GM12878 (cell line): ENCODE measurements at regions of chr22 and their contacts with region 1.

Region 1: DNA sequence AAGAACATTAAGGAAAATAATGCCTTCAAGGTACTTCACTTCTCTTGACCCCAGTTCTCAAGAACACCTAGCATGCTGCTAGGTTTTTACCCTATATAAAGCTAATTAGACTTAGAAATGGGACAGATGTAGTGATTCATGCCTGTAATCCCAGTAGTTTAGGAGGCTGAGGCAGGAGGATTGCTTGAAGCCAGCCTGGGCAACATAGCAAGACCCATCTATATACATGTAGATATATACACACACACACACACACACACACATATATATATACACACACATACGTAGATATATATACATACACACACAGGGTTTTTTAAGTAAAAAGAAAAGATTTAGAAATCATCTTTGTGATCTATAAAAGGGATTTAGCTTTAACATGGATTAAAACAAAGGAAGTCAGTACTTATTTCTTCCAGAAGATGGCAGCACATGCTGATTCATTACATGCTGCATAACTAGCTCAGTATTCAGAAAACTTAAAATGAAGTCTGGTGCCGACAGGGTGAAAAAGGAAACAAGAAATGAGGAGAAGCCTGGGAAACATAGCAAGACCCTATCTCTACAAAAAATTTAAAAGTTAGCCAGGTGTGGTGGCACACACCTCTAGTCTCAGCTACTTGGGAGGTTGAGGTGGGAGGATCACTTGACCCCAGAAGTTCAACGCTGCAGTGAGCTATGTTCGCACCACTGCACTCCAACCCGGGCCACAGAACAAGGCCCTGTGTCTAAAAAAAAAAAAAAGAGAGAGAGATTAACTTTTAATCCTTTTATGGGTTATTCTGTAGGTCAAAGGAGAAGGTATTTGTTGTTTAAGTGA is 28.5 kb upstream of the RBX1 start:
- DNase-seq: peak; percentile 47
- ATAC-seq: peak; percentile 88
- H3K4me3 ChIP-seq: no peak overlapping the region
- H3K27ac ChIP-seq: no peak overlapping the region
- H3K4me1 ChIP-seq: no peaks in the 10 kb centered on the region
- H3K27me3 ChIP-seq: no peaks in the 10 kb centered on the region
- CTCF ChIP-seq: peak; percentile 41 to 67 (median 56); a peak in 5 of 6 replicates
- EP300 ChIP-seq: no peak
- POLR2A ChIP-seq: no peak
- RAD21 ChIP-seq: peak; percentile 84

Region 2: GRCh38 chr22:40939202-40939601 is 16.5 kb after region 1 on chr22:
- CTCF ChIA-PET with region 1: interaction called, 23 read pairs
- POLR2A ChIA-PET with region 1: no interaction called
- RAD21 ChIA-PET with region 1: interaction called, 6 read pairs
- SMC1A ChIA-PET with region 1: interaction called, 25 read pairs
- in situ Hi-C with region 1: no loop called
- intact Hi-C with region 1: no loop called
- DNase-seq: no peak
- ATAC-seq: peak; percentile 54; the same call in 2 of the 3 replicates
- H3K4me3 ChIP-seq: no peak overlapping the region
- H3K27ac ChIP-seq: no peak overlapping the region
- H3K4me1 ChIP-seq: peaks cover 17% of the 10 kb centered on the region
- H3K27me3 ChIP-seq: no peaks in the 10 kb centered on the region
- CTCF ChIP-seq: no peak
- EP300 ChIP-seq: no peak
- POLR2A ChIP-seq: no peak
- RAD21 ChIP-seq: no peak

Region 3: DNA sequence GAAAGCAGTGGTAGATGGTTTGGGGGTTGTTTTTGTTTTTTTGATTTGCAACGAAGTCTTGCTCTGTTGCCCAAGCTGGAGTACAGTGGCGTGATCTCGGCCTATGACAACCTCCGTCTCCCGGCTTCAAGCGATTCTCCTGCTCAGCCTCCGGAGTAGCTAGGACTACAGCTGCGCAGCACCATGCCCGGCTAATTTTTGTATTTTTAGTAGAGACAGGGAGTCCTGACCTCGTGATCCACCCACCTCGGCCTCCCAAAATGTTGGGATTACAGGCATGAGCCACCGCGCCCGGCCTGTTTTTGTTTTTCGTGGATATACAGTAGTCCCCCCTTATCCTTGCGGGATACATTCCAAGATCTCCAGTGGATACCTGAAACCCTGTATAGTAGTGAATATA is 176.3 kb after region 1 on chr22:
- CTCF ChIA-PET with region 1: interaction called, 13 read pairs
- POLR2A ChIA-PET with region 1: interaction called, 8 read pairs
- RAD21 ChIA-PET with region 1: interaction called, 23 read pairs
- SMC1A ChIA-PET with region 1: interaction called, 13 read pairs
- in situ Hi-C with region 1: no loop called
- intact Hi-C with region 1: no loop called
- DNase-seq: no peak
- ATAC-seq: no peak
- H3K4me3 ChIP-seq: no peak overlapping the region
- H3K27ac ChIP-seq: no peak overlapping the region
- H3K4me1 ChIP-seq: no peaks in the 10 kb centered on the region; the same call in 1 of the 2 replicates
- H3K27me3 ChIP-seq: no peaks in the 10 kb centered on the region
- CTCF ChIP-seq: no peak
- EP300 ChIP-seq: no peak
- POLR2A ChIP-seq: no peak
- RAD21 ChIP-seq: no peak

Region 4: GRCh38 chr22:41140365-41140957 is 217.8 kb after region 1 on chr22:
- CTCF ChIA-PET with region 1: interaction called, 16 read pairs
- POLR2A ChIA-PET with region 1: no interaction called
- RAD21 ChIA-PET with region 1: interaction called, 7 read pairs
- SMC1A ChIA-PET with region 1: interaction called, 6 read pairs
- in situ Hi-C with region 1: no loop called
- intact Hi-C with region 1: loop called (anchors 5 kb)
- DNase-seq: no peak
- ATAC-seq: no peak
- H3K4me3 ChIP-seq: no peak overlapping the region
- H3K27ac ChIP-seq: no peak overlapping the region
- H3K4me1 ChIP-seq: no peaks in the 10 kb centered on the region
- H3K27me3 ChIP-seq: no peaks in the 10 kb centered on the region
- CTCF ChIP-seq: no peak
- EP300 ChIP-seq: no peak
- POLR2A ChIP-seq: no peak
- RAD21 ChIP-seq: no peak

Region 5: GRCh38 chr22:41191467-41191866 is 268.8 kb after region 1 on chr22:
- CTCF ChIA-PET with region 1: interaction called, 6 read pairs
- POLR2A ChIA-PET with region 1: interaction called, 10 read pairs
- RAD21 ChIA-PET with region 1: interaction called, 4 read pairs
- SMC1A ChIA-PET with region 1: interaction called, 5 read pairs
- in situ Hi-C with region 1: no loop called
- intact Hi-C with region 1: no loop called
- DNase-seq: no peak
- ATAC-seq: no peak
- H3K4me3 ChIP-seq: no peak overlapping the region
- H3K27ac ChIP-seq: no peak overlapping the region
- H3K4me1 ChIP-seq: no peaks in the 10 kb centered on the region
- H3K27me3 ChIP-seq: no peaks in the 10 kb centered on the region
- CTCF ChIP-seq: no peak
- EP300 ChIP-seq: no peak
- POLR2A ChIP-seq: no peak
- RAD21 ChIP-seq: no peak

Region 6: GRCh38 chr22:41403532-41404318 is 481.0 kb after region 1 on chr22:
- CTCF ChIA-PET with region 1: interaction called, 6 read pairs
- POLR2A ChIA-PET with region 1: no interaction called
- RAD21 ChIA-PET with region 1: interaction called, 10 read pairs
- SMC1A ChIA-PET with region 1: interaction called, 5 read pairs
- in situ Hi-C with region 1: no loop called
- intact Hi-C with region 1: no loop called
- DNase-seq: peak; percentile 58
- ATAC-seq: peak; percentile 97
- H3K4me3 ChIP-seq: no peak overlapping the region
- H3K27ac ChIP-seq: no peak overlapping the region
- H3K4me1 ChIP-seq: peaks cover 14% of the 10 kb centered on the region
- H3K27me3 ChIP-seq: no peaks in the 10 kb centered on the region
- CTCF ChIP-seq: peak; percentile 97 to 98 (median 97); a peak in 5 of 6 replicates
- EP300 ChIP-seq: no peak
- POLR2A ChIP-seq: no peak
- RAD21 ChIP-seq: peak; percentile 95